ENCODE measurements at regions of chr19 and their contacts with region 1.

Region 1: DNA sequence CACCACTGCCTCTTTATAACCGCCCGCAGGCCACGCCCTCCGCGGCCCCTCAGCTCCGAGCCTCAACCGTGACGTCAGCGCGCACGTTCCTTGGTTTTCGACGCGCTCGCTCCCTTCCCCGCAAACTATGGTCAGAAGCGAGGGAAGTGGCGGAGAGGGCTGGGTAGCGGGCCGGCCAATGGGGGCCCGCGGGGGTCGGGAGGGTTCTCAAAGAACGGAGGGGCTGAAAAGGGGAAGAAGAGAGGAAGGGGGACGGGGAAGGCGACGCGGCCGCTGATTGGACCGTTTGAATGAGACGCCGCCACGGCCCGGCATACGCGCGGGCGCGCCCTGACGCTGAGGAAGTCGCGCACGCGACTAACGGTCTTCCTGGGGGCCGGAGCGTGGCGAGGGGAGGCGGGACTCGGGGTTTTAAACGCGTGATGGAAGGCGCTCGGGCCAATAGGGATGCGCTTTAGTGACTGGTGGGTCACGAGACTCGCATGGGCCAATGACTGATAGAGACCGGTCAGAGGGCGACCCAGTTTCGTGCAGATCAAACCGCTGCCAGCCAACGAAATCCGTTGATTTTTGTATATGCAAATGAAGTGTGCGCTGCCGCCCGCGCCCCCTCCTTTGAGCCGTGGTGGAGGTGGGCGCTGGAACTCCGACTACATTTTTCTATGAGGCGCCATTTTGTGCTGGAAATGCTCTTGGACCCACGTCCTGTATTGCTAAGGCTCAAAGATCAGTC is 378 bp upstream of the UBE2S start:
- DNase-seq: peak; percentile 98
- CTCF ChIP-seq: no peak

Region 2: DNA sequence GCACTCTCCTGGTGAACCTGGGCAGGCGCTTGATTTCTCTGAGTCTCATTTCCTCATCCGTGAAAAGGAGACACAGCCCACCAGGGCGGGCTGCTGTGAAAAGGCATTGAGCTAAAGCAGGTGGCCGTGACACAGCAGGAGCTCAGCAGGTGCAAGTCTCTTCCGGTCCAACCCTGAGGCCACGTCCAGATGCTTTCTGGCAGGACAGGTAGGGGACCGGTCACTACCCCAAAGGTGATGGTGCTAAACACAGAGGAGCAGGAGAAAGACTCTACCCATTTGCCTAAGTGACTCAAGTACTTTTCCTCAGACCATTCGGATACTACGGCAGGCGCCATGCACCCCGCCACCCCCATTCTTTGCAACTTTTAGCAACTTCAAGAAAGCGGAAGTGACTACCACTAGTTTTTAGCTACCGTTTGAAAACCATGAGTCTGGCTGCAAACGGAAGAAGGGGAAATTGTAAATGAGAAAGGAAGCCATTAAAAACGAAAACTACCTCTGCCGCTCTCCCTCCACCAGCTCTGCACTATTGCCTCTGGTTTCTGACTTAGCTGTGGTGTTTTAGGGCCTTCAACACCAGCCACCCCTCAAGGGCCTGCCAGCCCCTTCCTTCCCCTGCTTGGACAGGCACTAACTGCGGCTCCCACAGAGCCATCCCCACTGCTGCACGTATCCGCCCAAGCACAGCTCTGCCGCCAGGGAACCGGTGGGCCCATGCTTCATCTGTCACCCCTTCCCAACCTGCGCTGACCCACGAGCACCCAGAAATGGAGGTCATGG is 153.9 kb before region 1 on chr19:
- CTCF ChIA-PET with region 1: no interaction called
- POLR2A ChIA-PET with region 1: interaction called, 10 read pairs
- DNase-seq: peak; percentile 79
- CTCF ChIP-seq: no peak

Region 3: DNA sequence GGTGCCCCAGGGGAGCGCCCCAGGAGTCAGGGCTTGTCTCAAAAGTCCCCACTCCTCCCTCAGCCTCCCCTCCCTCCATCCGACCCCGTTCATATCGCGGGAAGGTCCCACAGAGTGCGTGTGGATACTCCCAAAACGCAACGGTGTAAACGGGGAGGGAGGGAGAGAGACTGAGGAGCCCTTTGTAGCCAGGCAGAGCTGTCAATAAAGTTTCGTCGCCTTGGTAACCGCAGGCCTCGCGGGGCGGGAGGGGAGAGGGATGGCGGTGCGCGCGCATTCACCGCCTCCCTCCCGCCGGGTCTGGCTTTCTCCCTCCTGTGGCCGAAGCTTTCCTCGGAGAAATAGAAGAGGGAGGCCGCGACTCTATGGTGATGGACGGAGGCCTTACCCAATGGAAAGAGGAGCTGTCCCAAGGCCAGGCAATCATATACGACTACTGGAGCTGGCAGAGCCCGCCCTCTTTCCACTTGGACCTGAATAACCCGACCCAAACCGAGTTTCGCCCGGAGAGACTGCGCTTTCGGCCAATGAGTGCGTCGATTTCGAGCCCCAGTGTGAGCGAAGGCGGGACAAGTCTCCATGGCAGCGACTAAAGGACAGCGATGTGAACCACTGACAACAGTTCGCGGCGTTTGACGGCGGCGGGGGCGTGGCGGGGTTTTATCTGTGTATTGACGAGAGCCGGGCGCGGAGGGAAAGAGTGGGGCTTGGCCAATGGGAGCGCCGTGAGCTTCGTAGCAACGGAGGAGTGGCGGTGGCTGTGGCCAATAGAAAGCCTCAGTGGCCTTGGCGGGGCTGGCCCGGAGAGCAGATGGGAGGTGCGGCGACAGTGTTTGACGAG is 68.7 kb before region 1 on chr19 and contains the start of gene KMT5C:
- CTCF ChIA-PET with region 1: no interaction called
- POLR2A ChIA-PET with region 1: interaction called, 12 read pairs
- DNase-seq: peak; percentile 98
- CTCF ChIP-seq: no peak

Region 4: DNA sequence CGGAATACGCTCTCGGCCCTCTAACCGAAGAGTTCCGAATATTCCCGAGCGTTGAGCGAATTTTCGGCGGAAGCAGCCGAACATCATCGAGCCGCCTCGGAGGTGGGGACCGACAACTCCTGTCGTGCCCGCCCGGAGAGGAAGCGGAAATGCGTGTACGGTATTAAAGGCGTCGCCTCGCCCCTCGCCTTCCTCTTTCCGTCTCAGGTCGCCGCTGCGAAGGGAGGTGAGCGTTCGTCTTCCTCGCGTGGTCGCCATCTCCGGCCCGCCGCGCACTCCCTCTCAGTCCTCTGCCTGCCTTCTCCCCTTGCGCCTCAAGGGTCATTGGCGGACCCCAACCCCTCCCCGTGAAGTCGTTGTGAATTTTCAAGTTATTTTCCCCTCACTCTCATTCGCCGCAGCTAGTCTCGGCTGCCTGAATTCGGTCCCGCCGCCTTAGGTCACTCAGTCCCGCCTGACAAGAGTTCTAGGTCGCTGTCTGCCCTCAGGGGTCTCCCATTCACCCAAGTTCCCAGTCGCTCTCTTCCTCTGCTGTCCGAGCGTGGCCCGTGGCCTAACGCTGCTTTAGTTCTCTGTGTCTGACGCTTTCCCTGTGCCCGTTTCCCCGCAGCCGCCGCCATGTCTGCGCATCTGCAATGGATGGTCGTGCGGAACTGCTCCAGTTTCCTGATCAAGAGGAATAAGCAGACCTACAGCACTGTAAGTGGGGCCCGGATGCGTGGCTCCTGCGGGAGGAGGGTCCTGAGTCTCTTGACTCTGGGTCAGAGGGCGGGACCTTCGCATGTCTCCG is 22.0 kb before region 1 on chr19 and contains the start of gene RPL28:
- CTCF ChIA-PET with region 1: interaction called, 8 read pairs
- POLR2A ChIA-PET with region 1: interaction called, 29 read pairs
- DNase-seq: peak; percentile 98
- CTCF ChIP-seq: no peak

Region 5: GRCh38 chr19:55392820-55393761 is 14.9 kb before region 1 on chr19:
- CTCF ChIA-PET with region 1: interaction called, 4 read pairs
- POLR2A ChIA-PET with region 1: interaction called, 29 read pairs
- DNase-seq: no peak
- CTCF ChIP-seq: no peak

Region 6: DNA sequence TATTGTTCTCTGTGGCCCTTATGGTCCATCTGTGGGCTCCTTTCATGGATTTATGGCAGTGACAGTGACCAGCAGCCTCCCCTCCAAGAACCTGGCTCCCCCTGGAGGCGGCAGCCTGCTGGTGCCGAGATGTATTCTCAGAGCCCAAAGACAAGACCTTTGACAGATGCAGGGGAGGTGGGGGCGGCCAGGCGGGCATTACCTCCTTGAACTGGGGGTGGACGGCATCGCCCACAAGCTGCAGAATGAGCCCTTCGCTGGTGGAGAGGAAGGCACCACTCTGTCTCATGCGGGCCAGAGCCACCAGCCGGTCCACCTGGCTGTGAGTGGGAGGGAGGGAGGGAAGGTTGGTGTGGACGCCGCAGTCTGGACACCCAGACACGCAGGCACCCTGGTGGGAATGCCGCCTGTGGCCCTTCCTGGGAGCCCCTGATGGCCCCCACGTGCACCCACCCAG is 46.8 kb after region 1 on chr19:
- CTCF ChIA-PET with region 1: no interaction called
- POLR2A ChIA-PET with region 1: no interaction called
- DNase-seq: peak; percentile 68
- CTCF ChIP-seq: peak; percentile 75